Naive thymus-derived CD4-positive, alpha-beta T cell (primary cell): ENCODE measurements at regions of chr17 and their contacts with region 1.

Region 1: GRCh38 chr17:41966463-41967140 is at the start of gene CNP:
- DNase-seq: peak; percentile 84 to 94 (median 88)
- ATAC-seq: peak; percentile 94
- H3K4me3 ChIP-seq: peak within 1 kb of the TSS; percentile 87
- H3K4me3 Mint-ChIP-seq: peak within 1 kb of the TSS; percentile 78 to 93 (median 88)
- H3K27ac ChIP-seq: peak within 1 kb of the TSS; percentile 88
- H3K27ac Mint-ChIP-seq: peak within 1 kb of the TSS; percentile 83 to 96 (median 89)
- H3K4me1 ChIP-seq: peaks cover 10 to 16% of the 10 kb centered on the region in 2 donors
- H3K4me1 Mint-ChIP-seq: peaks cover 24 to 51% (median 36%) of the 10 kb centered on the region in 7 donors
- H3K27me3 ChIP-seq: no peaks in the 10 kb centered on the region
- H3K27me3 Mint-ChIP-seq: peaks cover 0 to 2% (median 0%) of the 10 kb centered on the region in 5 donors
- total RNA-seq, gene CNP: 29.6 to 86.3 (median 32.5) TPM

Region 2: DNA sequence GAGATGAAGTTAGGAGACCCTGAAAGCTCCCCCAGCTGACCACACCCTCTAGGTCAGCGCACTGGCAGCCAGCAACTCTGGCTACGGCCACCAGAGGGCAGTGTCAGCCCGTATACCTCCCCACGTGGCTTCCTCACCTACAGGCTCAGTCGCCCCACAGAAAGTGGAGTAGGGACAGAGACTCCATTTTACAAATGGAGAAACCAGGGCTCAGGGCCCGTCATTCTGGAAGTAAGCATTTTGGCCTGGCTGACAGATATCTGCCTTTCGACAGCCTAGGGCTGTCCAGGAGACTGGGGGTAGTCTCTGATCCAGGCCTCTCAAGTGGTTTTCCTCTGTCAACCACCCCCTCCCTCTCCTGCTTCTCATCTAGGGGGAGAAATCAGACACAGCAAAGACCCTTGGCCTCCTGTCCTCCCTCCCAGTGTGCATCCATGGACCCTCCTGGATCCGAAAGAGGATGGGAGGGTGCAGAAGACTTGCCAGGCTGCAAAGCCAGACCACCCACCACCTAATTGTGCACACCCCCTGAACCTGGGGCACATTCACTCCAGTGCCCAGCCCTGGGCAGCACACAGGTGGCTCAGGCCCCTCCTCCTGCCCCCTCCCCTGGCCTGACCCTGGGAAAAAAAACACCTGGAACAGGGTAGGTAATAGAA is 228.4 kb before region 1 on chr17:
- CTCF ChIA-PET with region 1: no interaction called
- POLR2A ChIA-PET with region 1: no interaction called
- intact Hi-C with region 1: loop called (anchors 5 kb)
- DNase-seq: peak; percentile 61 to 83 (median 74)
- ATAC-seq: peak; percentile 97
- H3K4me3 ChIP-seq: no peak overlapping the region
- H3K4me3 Mint-ChIP-seq: no peak overlapping the region
- H3K27ac ChIP-seq: no peak overlapping the region
- H3K27ac Mint-ChIP-seq: peak overlapping the region in 1 of 9 donors; percentile 39
- H3K4me1 ChIP-seq: peaks cover 0 to 13% of the 10 kb centered on the region in 2 donors
- H3K4me1 Mint-ChIP-seq: peaks cover 4 to 12% (median 7%) of the 10 kb centered on the region in 7 donors
- H3K27me3 ChIP-seq: peaks cover 3 to 7% of the 10 kb centered on the region in 2 donors
- H3K27me3 Mint-ChIP-seq: peaks cover 32 to 38% (median 38%) of the 10 kb centered on the region in 5 donors

Region 3: DNA sequence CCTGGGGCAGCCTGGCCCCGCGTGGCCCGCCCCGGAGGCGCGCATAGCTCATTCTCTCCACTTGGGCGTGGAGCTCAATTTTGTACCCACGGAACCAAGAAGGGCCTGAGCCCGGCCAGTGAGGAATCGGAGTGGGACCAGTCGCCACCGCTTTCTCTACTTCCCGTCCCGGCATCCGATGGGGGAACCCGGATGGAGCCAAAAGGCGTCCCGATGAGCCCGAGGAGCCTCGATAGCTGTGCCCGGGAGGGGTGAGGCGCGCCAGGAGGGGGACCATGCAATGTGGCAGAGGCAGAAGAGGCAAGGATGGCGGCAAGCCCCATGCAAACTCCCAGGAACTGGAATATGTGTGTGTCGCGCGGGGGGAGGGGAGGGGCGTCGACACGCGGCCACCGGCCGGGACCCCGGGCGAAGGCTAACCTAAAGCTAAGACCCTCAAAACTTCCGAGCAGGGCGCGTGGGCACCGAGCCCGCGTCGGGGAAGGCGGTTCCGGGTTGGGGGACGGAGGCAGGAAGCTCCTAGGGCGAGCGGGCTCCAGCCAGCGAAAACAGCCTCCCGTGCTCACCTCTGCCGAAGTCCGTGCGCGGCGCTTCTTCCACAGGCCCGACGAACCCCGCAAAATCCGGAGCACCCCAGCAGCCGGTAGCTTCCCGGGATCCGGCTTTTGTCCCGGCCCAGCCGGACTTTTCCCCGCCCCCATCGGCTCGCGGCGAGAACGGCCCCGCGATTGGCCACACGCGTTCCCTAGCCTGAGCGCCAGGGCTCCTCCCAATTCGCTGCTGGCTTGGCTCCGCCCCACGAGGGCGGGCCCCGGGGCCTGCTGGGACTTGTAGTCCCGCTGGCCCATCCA is 48.1 kb before region 1 on chr17 and contains the start of gene ACLY:
- CTCF ChIA-PET with region 1: no interaction called
- POLR2A ChIA-PET with region 1: interaction called, 8 read pairs
- intact Hi-C with region 1: loop called (anchors 1 kb)
- DNase-seq: peak; percentile 88 to 99 (median 92)
- ATAC-seq: peak; percentile 100
- H3K4me3 ChIP-seq: peak within 1 kb of the TSS; percentile 94
- H3K4me3 Mint-ChIP-seq: peak within 1 kb of the TSS; percentile 84 to 99 (median 89)
- H3K27ac ChIP-seq: peak within 1 kb of the TSS; percentile 79
- H3K27ac Mint-ChIP-seq: peak within 1 kb of the TSS; percentile 48 to 97 (median 78)
- H3K4me1 ChIP-seq: peaks cover 8 to 14% of the 10 kb centered on the region in 2 donors
- H3K4me1 Mint-ChIP-seq: peaks cover 29 to 48% (median 35%) of the 10 kb centered on the region in 7 donors
- H3K27me3 ChIP-seq: no peaks in the 10 kb centered on the region
- H3K27me3 Mint-ChIP-seq: no peaks in the 10 kb centered on the region
- total RNA-seq, gene ACLY: 59.2 to 154 (median 70.8) TPM

Region 4: GRCh38 chr17:41930009-41930832 is 36.4 kb before region 1 on chr17 and contains the start of gene ODAD4:
- CTCF ChIA-PET with region 1: interaction called, 7 read pairs
- POLR2A ChIA-PET with region 1: interaction called, 19 read pairs
- intact Hi-C with region 1: loop called in 1 of 2 experiments (anchors 1 kb)
- DNase-seq: peak; percentile 87 to 98 (median 97)
- ATAC-seq: peak; percentile 98
- H3K4me3 ChIP-seq: peak within 1 kb of the TSS; percentile 79
- H3K4me3 Mint-ChIP-seq: peak within 1 kb of the TSS; percentile 93 to 100 (median 96)
- H3K27ac ChIP-seq: peak within 1 kb of the TSS; percentile 84
- H3K27ac Mint-ChIP-seq: peak within 1 kb of the TSS; percentile 90 to 100 (median 96)
- H3K4me1 ChIP-seq: peaks cover 9 to 11% of the 10 kb centered on the region in 2 donors
- H3K4me1 Mint-ChIP-seq: peaks cover 18 to 52% (median 24%) of the 10 kb centered on the region in 7 donors
- H3K27me3 ChIP-seq: no peaks in the 10 kb centered on the region
- H3K27me3 Mint-ChIP-seq: no peaks in the 10 kb centered on the region
- total RNA-seq, gene ODAD4: 0.16 to 4.1 (median 1.6) TPM in 4 of 5 experiments, not detected in the other

Region 5: GRCh38 chr17:42067351-42068091 is 100.9 kb after region 1 on chr17:
- CTCF ChIA-PET with region 1: interaction called, 4 read pairs
- POLR2A ChIA-PET with region 1: interaction called, 3 read pairs
- intact Hi-C with region 1: loop called in 1 of 2 experiments (anchors 1 kb)
- DNase-seq: peak; percentile 31 to 72 (median 58)
- ATAC-seq: peak; percentile 63
- H3K4me3 ChIP-seq: no peak overlapping the region
- H3K4me3 Mint-ChIP-seq: no peak overlapping the region
- H3K27ac ChIP-seq: no peak overlapping the region
- H3K27ac Mint-ChIP-seq: peak overlapping the region in 1 of 9 donors; percentile 36
- H3K4me1 ChIP-seq: peaks cover 7 to 30% of the 10 kb centered on the region in 2 donors
- H3K4me1 Mint-ChIP-seq: peaks cover 9 to 30% (median 23%) of the 10 kb centered on the region in 7 donors
- H3K27me3 ChIP-seq: peaks cover 0 to 2% of the 10 kb centered on the region in 2 donors
- H3K27me3 Mint-ChIP-seq: peaks cover 4 to 21% (median 11%) of the 10 kb centered on the region in 5 donors

Region 6: DNA sequence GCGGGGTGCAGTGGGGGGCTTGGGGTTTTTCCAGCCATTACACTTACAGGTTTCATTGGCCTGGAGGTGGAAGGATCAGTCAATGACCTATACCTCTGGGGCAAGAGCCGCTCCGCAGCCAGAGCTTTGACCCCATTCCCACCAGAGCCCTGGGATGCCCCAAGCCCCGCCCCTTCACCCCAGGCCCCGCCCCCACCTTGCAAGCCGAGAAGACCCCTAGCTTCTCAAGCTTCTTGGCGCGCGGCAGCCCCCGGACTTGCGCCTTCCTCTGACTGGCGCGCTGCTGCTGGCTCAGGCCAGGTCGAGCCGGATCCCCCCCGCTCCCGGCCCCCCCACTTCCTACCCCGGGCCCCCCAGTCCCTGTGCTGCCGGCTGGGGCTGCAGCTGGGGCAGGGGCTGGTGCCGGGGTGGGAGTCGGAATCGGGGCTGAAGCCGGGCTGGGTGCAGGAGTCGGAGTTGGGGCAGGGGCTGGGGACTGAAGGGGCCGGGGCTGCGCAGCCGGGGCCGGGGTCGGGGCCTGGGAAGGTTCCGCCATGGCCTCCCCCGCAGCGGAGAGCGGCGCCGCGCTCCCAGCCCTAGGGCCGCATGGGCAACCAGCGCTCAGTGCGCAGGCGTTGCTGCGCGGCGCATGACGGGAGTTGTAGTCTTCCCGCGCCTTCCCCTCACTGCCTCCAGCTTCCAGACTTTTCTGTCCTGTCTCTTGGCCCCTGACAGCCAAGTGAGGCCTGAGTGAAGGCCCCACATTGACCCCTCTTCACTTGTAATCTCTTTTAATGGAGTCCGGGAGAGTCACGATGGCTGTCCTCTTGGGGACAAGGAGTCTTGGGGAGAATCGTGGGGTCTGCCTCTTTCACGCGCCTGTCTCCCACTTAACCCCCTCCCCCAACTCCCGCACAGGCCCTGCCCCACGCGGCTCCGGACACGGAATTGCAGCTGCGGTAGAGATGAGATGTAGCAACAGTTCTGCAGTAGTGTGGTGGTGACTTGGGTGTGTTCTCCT is 154.5 kb after region 1 on chr17 and contains the start of gene KAT2A:
- CTCF ChIA-PET with region 1: interaction called, 4 read pairs
- POLR2A ChIA-PET with region 1: interaction called, 6 read pairs
- intact Hi-C with region 1: loop called (anchors 1 kb)
- DNase-seq: peak; percentile 48 to 80 (median 68)
- ATAC-seq: peak; percentile 92
- H3K4me3 ChIP-seq: peak within 1 kb of the TSS; percentile 56
- H3K4me3 Mint-ChIP-seq: peak within 1 kb of the TSS; percentile 58 to 85 (median 74)
- H3K27ac ChIP-seq: peak within 1 kb of the TSS; percentile 75
- H3K27ac Mint-ChIP-seq: peak within 1 kb of the TSS in 8 of 9 donors; percentile 31 to 79 (median 68)
- H3K4me1 ChIP-seq: peaks cover 4 to 15% of the 10 kb centered on the region in 2 donors
- H3K4me1 Mint-ChIP-seq: peaks cover 10 to 35% (median 21%) of the 10 kb centered on the region in 7 donors
- H3K27me3 ChIP-seq: no peaks in the 10 kb centered on the region
- H3K27me3 Mint-ChIP-seq: no peaks in the 10 kb centered on the region
- total RNA-seq, gene KAT2A: 39.6 to 71.1 (median 49.1) TPM

Region 7: GRCh38 chr17:42153919-42154742 is 187.5 kb after region 1 on chr17:
- CTCF ChIA-PET with region 1: no interaction called
- POLR2A ChIA-PET with region 1: interaction called, 3 read pairs
- intact Hi-C with region 1: loop called (anchors 1 kb)
- DNase-seq: no peak
- ATAC-seq: no peak
- H3K4me3 ChIP-seq: peak overlapping the region; percentile 76
- H3K4me3 Mint-ChIP-seq: peak overlapping the region; percentile 81 to 97 (median 94)
- H3K27ac ChIP-seq: peak overlapping the region; percentile 94
- H3K27ac Mint-ChIP-seq: peak overlapping the region; percentile 79 to 96 (median 93)
- H3K4me1 ChIP-seq: peaks cover 10 to 16% of the 10 kb centered on the region in 2 donors
- H3K4me1 Mint-ChIP-seq: peaks cover 21 to 43% (median 37%) of the 10 kb centered on the region in 7 donors
- H3K27me3 ChIP-seq: no peaks in the 10 kb centered on the region
- H3K27me3 Mint-ChIP-seq: no peaks in the 10 kb centered on the region